Natural killer cell (primary cell): ENCODE measurements at regions of chr5 and their contacts with region 1.

Region 1: GRCh38 chr5:122896598-122897282 is 51.3 kb downstream of the SNX24 start:
- DNase-seq: peak in 1 of 2 donors; percentile 12
- ATAC-seq: no peak
- H3K4me3 ChIP-seq: no peak overlapping the region
- H3K4me3 Mint-ChIP-seq: no peak overlapping the region
- H3K27ac ChIP-seq: no peak overlapping the region
- H3K27ac Mint-ChIP-seq: no peak overlapping the region
- H3K4me1 ChIP-seq: peaks cover 3% of the 10 kb centered on the region
- H3K4me1 Mint-ChIP-seq: peaks cover 4% of the 10 kb centered on the region in 2 donors
- H3K27me3 ChIP-seq: no peaks in the 10 kb centered on the region
- H3K27me3 Mint-ChIP-seq: no peaks in the 10 kb centered on the region
- CTCF ChIP-seq: no peak

Region 2: GRCh38 chr5:121462441-121462840 is 1434.3 kb before region 1 on chr5:
- intact Hi-C with region 1: no loop called
- DNase-seq: no peak
- ATAC-seq: no peak
- H3K4me3 ChIP-seq: no peak overlapping the region
- H3K4me3 Mint-ChIP-seq: no peak overlapping the region
- H3K27ac ChIP-seq: no peak overlapping the region
- H3K27ac Mint-ChIP-seq: no peak overlapping the region
- H3K4me1 ChIP-seq: no peaks in the 10 kb centered on the region
- H3K4me1 Mint-ChIP-seq: no peaks in the 10 kb centered on the region
- H3K27me3 ChIP-seq: no peaks in the 10 kb centered on the region
- H3K27me3 Mint-ChIP-seq: no peaks in the 10 kb centered on the region
- CTCF ChIP-seq: no peak

Region 3: DNA sequence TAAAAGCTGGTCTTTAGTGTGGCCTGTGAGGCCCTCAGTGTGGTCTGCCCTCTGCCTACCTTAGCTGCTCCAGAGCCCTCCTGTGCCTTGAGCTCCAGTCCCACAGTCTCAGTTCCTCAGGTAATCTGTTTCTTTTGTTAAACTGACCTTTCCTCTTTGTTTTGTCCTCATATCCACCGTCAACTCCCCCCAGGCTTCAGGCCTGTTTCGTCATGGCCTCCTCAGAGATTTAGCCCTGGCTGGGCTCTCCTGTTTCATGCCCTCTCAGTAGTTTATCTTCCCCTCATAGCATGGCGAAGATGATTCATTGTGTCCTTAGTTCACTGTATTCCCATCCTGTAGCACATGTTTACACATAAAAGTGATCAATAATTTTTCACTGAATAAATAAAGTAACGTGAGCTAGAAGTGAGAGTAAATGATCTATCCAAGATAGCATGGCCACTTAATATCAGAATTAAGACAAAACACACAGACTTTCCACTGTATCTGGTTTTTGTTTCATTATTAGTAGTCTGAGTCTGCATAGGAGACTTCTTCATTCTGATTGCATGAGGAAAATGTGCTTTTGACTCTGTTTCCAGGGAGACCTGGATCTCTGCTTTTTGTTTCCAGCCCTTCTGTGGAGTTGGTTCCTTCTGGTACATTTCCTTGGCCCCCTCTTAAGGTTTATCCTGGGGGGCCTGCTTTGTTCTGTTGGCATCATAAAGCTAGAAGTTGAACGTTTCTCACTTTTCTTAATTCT is 19.1 kb after region 1 on chr5:
- intact Hi-C with region 1: no loop called
- DNase-seq: no peak
- ATAC-seq: no peak
- H3K4me3 ChIP-seq: no peak overlapping the region
- H3K4me3 Mint-ChIP-seq: no peak overlapping the region
- H3K27ac ChIP-seq: no peak overlapping the region
- H3K27ac Mint-ChIP-seq: no peak overlapping the region
- H3K4me1 ChIP-seq: no peaks in the 10 kb centered on the region
- H3K4me1 Mint-ChIP-seq: peaks cover 0 to 10% of the 10 kb centered on the region in 2 donors
- H3K27me3 ChIP-seq: no peaks in the 10 kb centered on the region
- H3K27me3 Mint-ChIP-seq: no peaks in the 10 kb centered on the region
- CTCF ChIP-seq: no peak

Region 4: GRCh38 chr5:123610665-123611405 is 714.1 kb after region 1 on chr5:
- intact Hi-C with region 1: loop called (anchors 2 kb)
- DNase-seq: peak in 1 of 2 donors; percentile 82
- ATAC-seq: peak; percentile 81 to 88 (median 84)
- H3K4me3 ChIP-seq: no peak overlapping the region
- H3K4me3 Mint-ChIP-seq: no peak overlapping the region
- H3K27ac ChIP-seq: no peak overlapping the region
- H3K27ac Mint-ChIP-seq: peak overlapping the region; percentile 37 to 61
- H3K4me1 ChIP-seq: no peaks in the 10 kb centered on the region
- H3K4me1 Mint-ChIP-seq: no peaks in the 10 kb centered on the region
- H3K27me3 ChIP-seq: no peaks in the 10 kb centered on the region
- H3K27me3 Mint-ChIP-seq: no peaks in the 10 kb centered on the region
- CTCF ChIP-seq: peak; percentile 100

Region 5: GRCh38 chr5:123636011-123636410 is 739.3 kb after region 1 on chr5:
- intact Hi-C with region 1: no loop called
- DNase-seq: no peak
- ATAC-seq: no peak
- H3K4me3 ChIP-seq: no peak overlapping the region
- H3K4me3 Mint-ChIP-seq: no peak overlapping the region
- H3K27ac ChIP-seq: no peak overlapping the region
- H3K27ac Mint-ChIP-seq: no peak overlapping the region
- H3K4me1 ChIP-seq: no peaks in the 10 kb centered on the region
- H3K4me1 Mint-ChIP-seq: no peaks in the 10 kb centered on the region
- H3K27me3 ChIP-seq: peaks cover 2% of the 10 kb centered on the region
- H3K27me3 Mint-ChIP-seq: peaks cover 5 to 14% of the 10 kb centered on the region in 2 donors
- CTCF ChIP-seq: no peak